ENCODE measurements at regions of chrX and their contacts with region 1.

Region 1: GRCh38 chrX:79270401-79270800 is 96.7 kb downstream of the ITM2A start:
- DNase-seq: peak; percentile 77
- ATAC-seq: peak; percentile 91
- H3K4me3 ChIP-seq: no peak overlapping the region
- H3K4me3 Mint-ChIP-seq: no peak overlapping the region
- H3K27ac ChIP-seq: peak overlapping the region; percentile 16 to 42
- H3K27ac Mint-ChIP-seq: peak overlapping the region; percentile 54
- H3K4me1 ChIP-seq: peaks cover 20 to 26% of the 10 kb centered on the region in 2 donors
- H3K4me1 Mint-ChIP-seq: peaks cover 44% of the 10 kb centered on the region
- H3K27me3 ChIP-seq: no peaks in the 10 kb centered on the region
- H3K27me3 Mint-ChIP-seq: no peaks in the 10 kb centered on the region
- CTCF ChIP-seq: peak; percentile 77

Region 2: GRCh38 chrX:78139160-78140123 is 1131.0 kb before region 1 on chrX and contains the start of gene TAF9B:
- CTCF ChIA-PET with region 1: no interaction called
- POLR2A ChIA-PET with region 1: no interaction called
- intact Hi-C with region 1: loop called (anchors 10 kb)
- DNase-seq: peak; percentile 77
- ATAC-seq: peak; percentile 95
- H3K4me3 ChIP-seq: peak within 1 kb of the TSS; percentile 34 to 83 (median 77)
- H3K4me3 Mint-ChIP-seq: peak within 1 kb of the TSS; percentile 95
- H3K27ac ChIP-seq: peak within 1 kb of the TSS; percentile 44 to 71
- H3K27ac Mint-ChIP-seq: peak within 1 kb of the TSS; percentile 90
- H3K4me1 ChIP-seq: peaks cover 0 to 3% of the 10 kb centered on the region in 2 donors
- H3K4me1 Mint-ChIP-seq: peaks cover 6% of the 10 kb centered on the region
- H3K27me3 ChIP-seq: no peaks in the 10 kb centered on the region
- H3K27me3 Mint-ChIP-seq: no peaks in the 10 kb centered on the region
- CTCF ChIP-seq: no peak
- total RNA-seq, gene TAF9B: 12.2 and 13.7 TPM in 2 replicates

Region 3: GRCh38 chrX:78886550-78886949 is 383.9 kb before region 1 on chrX:
- CTCF ChIA-PET with region 1: interaction called, 3 read pairs
- POLR2A ChIA-PET with region 1: no interaction called
- intact Hi-C with region 1: loop called (anchors 5 kb)
- DNase-seq: peak; percentile 36
- ATAC-seq: peak; percentile 72
- H3K4me3 ChIP-seq: no peak overlapping the region
- H3K4me3 Mint-ChIP-seq: no peak overlapping the region
- H3K27ac ChIP-seq: no peak overlapping the region
- H3K27ac Mint-ChIP-seq: no peak overlapping the region
- H3K4me1 ChIP-seq: no peaks in the 10 kb centered on the region
- H3K4me1 Mint-ChIP-seq: peaks cover 11% of the 10 kb centered on the region
- H3K27me3 ChIP-seq: no peaks in the 10 kb centered on the region
- H3K27me3 Mint-ChIP-seq: no peaks in the 10 kb centered on the region
- CTCF ChIP-seq: peak; percentile 49

Region 4: DNA sequence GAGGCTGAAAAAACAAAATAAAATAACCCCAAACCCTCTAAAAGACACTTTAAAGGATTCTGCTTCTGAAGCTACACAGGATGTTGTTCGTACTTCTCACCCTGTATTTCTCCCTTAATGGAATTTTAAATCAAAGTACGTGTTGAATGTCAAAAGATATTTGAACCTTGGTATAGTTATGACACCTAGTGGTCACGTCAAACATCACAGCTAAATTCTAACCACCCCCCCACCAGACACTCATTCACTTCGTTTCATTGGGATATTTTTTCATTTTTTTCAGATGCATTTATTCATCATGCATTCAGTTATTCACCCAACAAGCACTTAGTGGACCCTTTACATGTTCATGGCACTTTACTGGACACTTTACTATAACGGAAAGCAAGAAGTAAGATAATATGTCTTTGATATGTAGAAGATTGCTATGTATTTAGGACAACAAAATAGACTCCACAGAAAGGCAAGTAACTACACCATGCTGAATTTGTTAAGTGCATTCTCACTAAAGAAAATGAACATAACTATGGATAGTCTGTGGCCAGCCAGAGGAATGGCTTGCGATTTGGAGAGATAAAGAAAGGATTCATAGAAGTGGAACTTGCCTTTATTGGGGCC is 188.4 kb before region 1 on chrX:
- CTCF ChIA-PET with region 1: interaction called, 39 read pairs
- POLR2A ChIA-PET with region 1: no interaction called
- intact Hi-C with region 1: loop called (anchors 1 kb)
- DNase-seq: peak; percentile 69
- ATAC-seq: peak; percentile 78
- H3K4me3 ChIP-seq: peak overlapping the region in 2 of 5 experiments; percentile 12 to 26
- H3K4me3 Mint-ChIP-seq: peak overlapping the region; percentile 55
- H3K27ac ChIP-seq: peak overlapping the region in 1 of 2 donors; percentile 32
- H3K27ac Mint-ChIP-seq: peak overlapping the region; percentile 51
- H3K4me1 ChIP-seq: peaks cover 4 to 9% of the 10 kb centered on the region in 2 donors
- H3K4me1 Mint-ChIP-seq: peaks cover 10% of the 10 kb centered on the region
- H3K27me3 ChIP-seq: no peaks in the 10 kb centered on the region
- H3K27me3 Mint-ChIP-seq: no peaks in the 10 kb centered on the region
- CTCF ChIP-seq: peak; percentile 70

Measured in B cell (primary cell).